Ovary (tissue), 10 donors: ENCODE measurements at regions of chr15 and their contacts with region 1.

Region 1: GRCh38 chr15:56496635-56497034 is 31.7 kb upstream of the MNS1 start:
- DNase-seq: no peak
- H3K4me3 ChIP-seq: no peak overlapping the region
- H3K27ac ChIP-seq: no peak overlapping the region
- H3K4me1 ChIP-seq: no peaks in the 10 kb centered on the region
- H3K27me3 ChIP-seq: no peaks in the 10 kb centered on the region
- CTCF ChIP-seq: peak in 2 of 3 donors; percentile 60 to 72
- EP300 ChIP-seq: no peak
- POLR2A ChIP-seq: no peak

Region 2: DNA sequence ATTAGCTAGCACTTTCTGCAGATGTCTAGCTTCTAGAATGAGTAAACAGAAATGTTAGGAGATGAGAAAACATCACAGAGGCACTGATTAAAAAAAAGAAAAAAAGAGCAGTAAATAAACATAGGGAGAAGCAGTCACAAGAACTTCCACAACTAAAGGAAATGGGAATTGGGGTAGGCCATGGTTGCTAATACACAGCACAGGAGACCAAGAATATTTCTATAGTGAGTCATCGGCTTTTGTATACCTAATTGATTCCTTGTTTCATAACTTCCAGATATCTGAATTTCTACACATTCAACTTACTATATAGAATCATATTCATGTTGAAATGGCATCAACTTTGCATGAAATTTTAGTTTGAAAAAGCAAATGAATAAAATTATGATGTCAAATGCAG is 374.5 kb after region 1 on chr15:
- intact Hi-C with region 1: loop called in 1 of 4 experiments (anchors 5 kb)
- DNase-seq: no peak
- H3K4me3 ChIP-seq: no peak overlapping the region
- H3K27ac ChIP-seq: no peak overlapping the region
- H3K4me1 ChIP-seq: peaks cover 3% of the 10 kb centered on the region
- H3K27me3 ChIP-seq: no peaks in the 10 kb centered on the region
- CTCF ChIP-seq: no peak
- EP300 ChIP-seq: no peak
- POLR2A ChIP-seq: no peak

Region 3: GRCh38 chr15:57306161-57306943 is 809.7 kb after region 1 on chr15:
- intact Hi-C with region 1: loop called in 2 of 4 experiments (anchors 5 to 10 kb)
- DNase-seq: peak; percentile 73 to 90 (median 85)
- H3K4me3 ChIP-seq: peak overlapping the region; percentile 39
- H3K27ac ChIP-seq: peak overlapping the region in 1 of 2 donors; percentile 5
- H3K4me1 ChIP-seq: peaks cover 1% of the 10 kb centered on the region
- H3K27me3 ChIP-seq: no peaks in the 10 kb centered on the region
- CTCF ChIP-seq: peak; percentile 60 to 76 (median 63)
- EP300 ChIP-seq: no peak
- POLR2A ChIP-seq: no peak